ENCODE measurements at regions of chr5 and their contacts with region 1.

Region 1: DNA sequence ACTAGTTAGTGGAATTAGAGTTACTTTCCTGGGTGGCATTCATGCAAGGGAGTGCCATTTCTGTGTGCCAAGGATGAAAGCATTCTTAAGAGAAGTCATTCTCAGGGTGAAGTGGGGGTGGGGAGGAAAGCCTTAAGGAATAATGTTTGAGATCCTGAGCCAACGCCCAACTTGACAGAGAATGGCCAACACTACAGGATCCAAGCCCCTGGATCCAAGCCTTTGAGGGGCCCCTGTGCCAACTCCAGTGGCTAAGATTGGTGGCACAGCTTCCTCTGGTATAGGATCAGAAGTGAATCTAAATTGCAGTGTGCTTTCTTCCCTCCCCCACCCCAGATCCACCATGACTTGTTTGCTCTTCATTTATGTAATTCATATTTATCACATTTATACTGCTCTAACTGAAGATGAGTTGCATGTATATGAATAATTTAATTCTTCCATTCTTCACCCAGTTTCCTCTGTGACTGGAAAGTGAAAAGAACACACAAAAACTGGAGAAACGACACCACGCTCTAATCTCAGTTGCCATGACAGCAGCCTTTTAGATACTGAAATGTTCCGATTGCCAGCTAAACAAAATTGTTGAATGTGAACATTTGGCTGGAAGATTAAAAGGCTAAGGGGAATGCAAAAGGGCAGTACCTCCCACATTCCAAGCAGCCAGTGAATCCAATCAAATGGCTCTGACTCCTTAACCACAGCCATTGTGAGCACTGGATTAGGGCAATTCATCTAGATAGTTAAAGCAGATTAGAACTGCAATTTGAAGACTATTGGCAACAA is 4.5 kb downstream of the ZNF608 start:
- DNase-seq: peak; percentile 65
- H3K4me3 ChIP-seq: no peak overlapping the region
- H3K27ac ChIP-seq: peak overlapping the region; percentile 94
- H3K4me1 ChIP-seq: no peaks in the 10 kb centered on the region
- H3K27me3 ChIP-seq: no peaks in the 10 kb centered on the region
- CTCF ChIP-seq: no peak

Region 2: GRCh38 chr5:124614105-124614504 is 127.8 kb before region 1 on chr5:
- intact Hi-C with region 1: no loop called
- DNase-seq: no peak
- H3K4me3 ChIP-seq: no peak overlapping the region
- H3K27ac ChIP-seq: no peak overlapping the region
- H3K4me1 ChIP-seq: no peaks in the 10 kb centered on the region
- H3K27me3 ChIP-seq: no peaks in the 10 kb centered on the region
- CTCF ChIP-seq: no peak

Region 3: DNA sequence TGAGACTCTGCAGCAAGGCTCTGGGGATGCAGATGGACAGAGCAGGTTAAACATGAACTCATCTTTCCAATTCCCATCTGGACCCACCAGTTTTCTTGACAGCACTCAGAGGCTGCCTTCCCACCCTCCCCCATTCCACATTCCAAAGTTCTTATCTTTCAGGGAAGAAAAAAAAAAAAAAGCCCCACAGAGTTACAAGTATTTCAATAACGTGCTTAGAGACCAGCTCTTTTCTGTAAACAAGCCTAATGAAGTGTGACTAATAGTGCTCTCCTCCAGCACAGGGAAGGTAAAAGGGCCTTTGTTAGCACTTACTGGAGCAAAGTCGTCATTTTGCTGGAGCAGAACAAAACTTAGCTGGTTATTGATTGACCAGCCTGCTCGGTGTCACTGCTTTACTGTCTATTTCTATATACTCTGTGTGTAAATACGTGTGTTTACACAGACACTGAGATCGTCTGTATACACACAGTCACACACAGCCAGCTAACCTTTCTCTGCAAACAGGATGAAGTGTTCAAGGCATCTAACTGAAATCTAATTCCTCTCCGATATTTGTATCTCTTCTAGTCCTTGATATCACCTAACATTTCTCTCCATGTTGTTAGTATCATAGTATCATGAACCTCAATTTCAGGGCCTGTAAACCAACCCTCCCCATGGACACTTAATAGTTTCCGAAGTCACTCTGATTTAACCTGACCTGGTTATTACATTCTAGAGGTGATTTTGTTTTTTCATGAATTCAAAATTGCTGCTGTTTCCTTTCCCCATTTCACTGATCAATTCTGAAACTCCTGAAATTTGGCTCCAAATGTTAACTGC is 80.4 kb before region 1 on chr5:
- intact Hi-C with region 1: loop called (anchors 5 kb)
- DNase-seq: peak; percentile 57
- H3K4me3 ChIP-seq: no peak overlapping the region
- H3K27ac ChIP-seq: peak overlapping the region; percentile 67
- H3K4me1 ChIP-seq: peaks cover 34% of the 10 kb centered on the region
- H3K27me3 ChIP-seq: no peaks in the 10 kb centered on the region
- CTCF ChIP-seq: no peak

Region 4: DNA sequence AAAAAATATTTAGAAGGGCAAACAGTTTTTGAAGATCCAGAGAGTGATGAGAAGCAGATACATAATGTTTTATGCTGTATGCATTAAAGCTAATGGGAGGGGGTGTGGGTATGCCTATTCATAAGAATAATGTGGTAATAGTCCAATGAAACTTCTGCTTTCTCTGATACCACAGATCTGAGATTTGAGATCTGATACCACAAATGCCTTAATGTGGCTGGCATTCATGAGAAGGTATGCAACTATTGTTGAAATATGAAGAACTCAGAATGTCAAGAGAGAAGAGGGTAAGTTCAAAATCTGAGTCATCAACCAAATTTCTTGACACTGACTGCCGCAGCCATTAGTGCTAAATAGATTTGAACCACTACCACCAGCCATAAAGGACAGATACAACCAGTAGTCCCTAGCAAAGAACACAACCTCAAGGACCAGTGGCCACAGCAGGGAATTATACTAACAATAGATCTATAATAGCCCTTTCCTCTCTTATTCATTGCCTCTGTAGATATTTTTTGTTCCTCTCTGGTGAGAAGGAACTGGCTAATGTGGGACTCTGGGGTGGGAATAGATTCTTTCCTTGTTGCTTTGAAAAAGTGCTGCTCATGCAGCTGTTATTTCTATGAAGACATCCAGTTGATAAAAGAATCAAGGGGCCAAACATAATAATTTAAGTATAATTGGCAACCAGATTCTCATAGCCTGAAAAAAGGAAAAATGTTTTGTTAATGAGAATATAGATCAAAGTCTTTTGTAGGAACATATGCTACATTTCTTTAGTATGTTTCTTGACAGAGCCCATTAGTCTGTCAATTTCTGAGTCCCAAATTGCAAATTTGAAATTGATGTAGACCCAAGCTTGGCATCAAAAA is 261.1 kb after region 1 on chr5:
- intact Hi-C with region 1: no loop called
- DNase-seq: no peak
- H3K4me3 ChIP-seq: no peak overlapping the region
- H3K27ac ChIP-seq: no peak overlapping the region
- H3K4me1 ChIP-seq: no peaks in the 10 kb centered on the region
- H3K27me3 ChIP-seq: no peaks in the 10 kb centered on the region
- CTCF ChIP-seq: no peak